ENCODE measurements at regions of chr11 and their contacts with region 1.

Region 1: DNA sequence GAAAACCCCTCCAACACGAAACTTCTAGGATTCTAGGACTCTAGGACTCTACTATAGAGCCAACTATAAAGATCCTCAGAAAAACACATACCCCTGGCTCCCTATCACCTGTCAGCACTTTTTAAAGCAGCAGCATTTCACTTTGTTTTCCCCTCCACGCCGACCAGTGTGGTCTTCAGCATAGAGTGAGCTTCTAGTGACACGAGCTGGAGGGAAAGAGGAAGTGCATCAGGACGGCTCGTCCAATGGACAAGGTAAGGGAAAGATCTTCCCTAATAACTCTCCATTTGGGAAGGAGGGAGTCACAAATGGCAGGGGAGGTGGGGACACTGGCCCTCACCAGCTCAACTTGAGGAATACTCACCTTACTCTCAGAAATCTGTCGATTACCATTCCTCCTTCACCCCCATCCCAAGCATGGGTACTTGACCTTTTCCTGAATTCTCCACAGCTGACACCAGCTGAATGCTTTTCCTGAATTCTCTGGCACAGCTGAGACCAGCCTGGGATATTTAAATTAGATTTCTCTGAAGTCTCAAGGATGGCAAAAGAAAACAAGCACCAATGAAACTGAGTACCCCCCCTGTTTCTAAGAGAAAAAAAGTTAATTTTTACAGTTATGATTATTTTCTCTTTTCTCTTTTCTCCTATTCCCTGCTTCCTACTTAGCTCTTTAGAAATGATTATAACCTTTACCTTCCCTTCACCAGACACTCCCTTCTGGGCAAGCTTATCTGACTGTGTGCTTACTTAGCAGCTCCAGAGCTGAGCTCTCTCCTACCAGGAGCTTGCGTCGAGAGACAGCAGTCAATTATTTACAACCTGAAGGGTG is 33.3 kb upstream of the NNMT start:
- H3K4me3 ChIP-seq: no peak overlapping the region
- H3K27ac ChIP-seq: no peak overlapping the region
- H3K4me1 ChIP-seq: no peaks in the 10 kb centered on the region
- CTCF ChIP-seq: peak; percentile 73

Region 2: GRCh38 chr11:113906038-113906437 is 356.9 kb before region 1 on chr11:
- CTCF ChIA-PET with region 1: interaction called, 40 read pairs
- POLR2A ChIA-PET with region 1: no interaction called
- H3K4me3 ChIP-seq: no peak overlapping the region
- H3K27ac ChIP-seq: peak overlapping the region; percentile 54
- H3K4me1 ChIP-seq: peaks cover 18% of the 10 kb centered on the region
- CTCF ChIP-seq: no peak

Region 3: GRCh38 chr11:114015119-114015518 is 247.8 kb before region 1 on chr11:
- CTCF ChIA-PET with region 1: interaction called, 18 read pairs
- POLR2A ChIA-PET with region 1: no interaction called
- H3K4me3 ChIP-seq: no peak overlapping the region
- H3K27ac ChIP-seq: no peak overlapping the region
- H3K4me1 ChIP-seq: no peaks in the 10 kb centered on the region
- CTCF ChIP-seq: no peak

Region 4: DNA sequence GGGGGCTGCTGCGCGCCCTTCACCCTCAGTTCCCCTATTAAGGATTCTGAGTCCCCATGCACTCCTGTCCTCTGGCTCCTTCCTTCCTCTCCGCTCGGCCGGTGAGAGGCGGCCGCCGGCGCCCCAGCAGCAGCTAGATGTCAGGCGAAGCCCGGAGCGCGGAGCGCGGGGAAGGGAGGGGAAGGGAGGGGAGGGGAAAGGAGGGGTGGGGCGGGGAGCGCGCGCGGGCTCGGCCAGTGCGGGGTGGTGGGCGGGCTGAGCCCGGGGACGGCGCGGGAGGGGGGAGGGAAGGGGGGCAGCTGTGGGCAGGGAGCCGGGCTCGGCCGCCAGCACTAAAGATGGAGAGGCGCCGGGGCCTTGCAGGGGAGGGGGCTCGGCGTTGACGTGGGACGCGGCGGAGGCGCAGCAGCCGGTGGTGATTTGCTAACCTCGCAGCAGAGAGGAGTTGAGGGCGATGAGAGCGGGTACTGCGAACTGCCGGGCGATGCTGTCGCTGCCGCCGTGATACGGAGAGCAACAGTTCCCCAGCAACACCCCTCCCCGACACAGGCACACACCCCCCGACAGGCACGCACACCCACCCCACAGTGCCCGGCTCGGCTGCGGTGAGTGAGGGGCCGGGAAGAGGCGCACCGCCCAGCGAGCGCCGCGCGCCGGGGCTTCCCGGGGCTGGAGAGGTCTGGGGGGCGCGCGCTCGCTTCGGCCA is 203.5 kb before region 1 on chr11 and contains the start of gene ZBTB16:
- CTCF ChIA-PET with region 1: interaction called, 13 read pairs
- POLR2A ChIA-PET with region 1: no interaction called
- H3K4me3 ChIP-seq: peak within 1 kb of the TSS; percentile 75
- H3K27ac ChIP-seq: peak within 1 kb of the TSS; percentile 90
- H3K4me1 ChIP-seq: no peaks in the 10 kb centered on the region; the same call in 1 of the 2 replicates
- CTCF ChIP-seq: no peak

Region 5: GRCh38 chr11:114166897-114167323 is 96.0 kb before region 1 on chr11:
- CTCF ChIA-PET with region 1: interaction called, 11 read pairs
- POLR2A ChIA-PET with region 1: interaction called, 3 read pairs
- H3K4me3 ChIP-seq: no peak overlapping the region
- H3K27ac ChIP-seq: peak overlapping the region; percentile 13
- H3K4me1 ChIP-seq: peaks cover 20% of the 10 kb centered on the region
- CTCF ChIP-seq: no peak

Region 6: DNA sequence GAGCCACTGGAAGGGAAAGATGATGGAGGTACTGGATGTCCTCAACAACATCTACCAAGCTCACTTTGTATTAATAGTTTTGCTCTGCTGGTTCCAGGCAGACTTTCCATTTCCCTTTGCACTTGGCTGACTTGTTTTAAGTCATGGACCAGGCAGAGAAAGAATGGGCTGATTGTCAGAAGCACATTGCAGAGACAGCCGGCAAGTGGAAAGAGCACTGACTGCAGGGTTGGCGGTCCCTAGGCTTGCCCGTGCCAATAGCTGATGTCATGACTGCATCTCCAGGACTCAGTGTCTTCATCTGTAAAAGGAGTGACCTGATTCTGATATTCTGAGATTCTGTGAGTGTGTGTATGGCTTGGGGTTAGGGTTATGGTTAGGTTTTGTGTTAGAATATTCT is 12.4 kb after region 1 on chr11:
- CTCF ChIA-PET with region 1: interaction called, 14 read pairs
- POLR2A ChIA-PET with region 1: no interaction called
- H3K4me3 ChIP-seq: no peak overlapping the region
- H3K27ac ChIP-seq: no peak overlapping the region
- H3K4me1 ChIP-seq: no peaks in the 10 kb centered on the region
- CTCF ChIP-seq: no peak

Region 7: DNA sequence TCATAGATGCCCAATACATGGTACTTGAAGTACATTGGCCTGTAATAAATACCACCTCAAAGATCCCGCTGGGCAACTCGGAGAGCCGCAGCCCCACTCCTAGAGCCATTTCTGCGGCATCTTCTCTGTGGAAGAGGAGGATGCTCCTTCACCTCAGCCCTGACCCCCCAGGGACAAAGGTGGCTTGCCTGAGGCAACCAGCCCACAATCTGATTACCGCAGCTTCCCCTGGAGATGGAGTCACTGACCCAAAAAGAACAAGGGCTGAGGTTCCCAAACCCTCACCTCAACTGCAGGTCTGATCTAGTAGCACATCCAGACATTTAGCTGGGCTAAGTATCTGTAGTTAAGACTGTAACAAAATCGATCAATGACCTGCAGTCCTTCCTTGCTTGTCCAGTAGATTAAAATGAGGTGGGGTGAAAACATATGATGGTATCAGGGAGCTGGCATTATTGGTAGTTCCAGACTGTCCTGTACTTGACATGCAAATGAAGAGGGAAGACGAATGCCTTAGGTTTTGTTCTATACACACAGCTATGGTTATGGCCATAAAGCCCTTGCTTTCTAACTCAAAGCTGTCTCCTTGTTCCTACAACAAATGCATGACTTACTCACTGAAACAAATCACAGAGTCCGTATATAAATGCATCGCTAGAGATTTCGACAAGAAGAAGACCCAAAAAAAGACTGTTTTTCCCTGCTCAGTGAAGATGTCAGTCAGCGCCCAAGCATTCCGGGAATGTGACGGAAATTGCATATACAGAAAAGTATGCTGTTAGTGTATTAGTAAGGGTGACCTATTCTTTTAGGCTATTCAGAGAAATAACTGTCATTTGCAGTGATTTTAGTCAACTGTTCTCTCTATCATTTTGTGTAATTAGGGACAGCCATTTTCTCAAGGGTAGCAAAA is 103.7 kb after region 1 on chr11:
- CTCF ChIA-PET with region 1: no interaction called
- POLR2A ChIA-PET with region 1: no interaction called
- H3K4me3 ChIP-seq: peak overlapping the region; percentile 10; the same call in 1 of the 2 replicates
- H3K27ac ChIP-seq: no peak overlapping the region
- H3K4me1 ChIP-seq: no peaks in the 10 kb centered on the region
- CTCF ChIP-seq: no peak